ENCODE measurements at regions of chr12 and their contacts with region 1.

Region 1: DNA sequence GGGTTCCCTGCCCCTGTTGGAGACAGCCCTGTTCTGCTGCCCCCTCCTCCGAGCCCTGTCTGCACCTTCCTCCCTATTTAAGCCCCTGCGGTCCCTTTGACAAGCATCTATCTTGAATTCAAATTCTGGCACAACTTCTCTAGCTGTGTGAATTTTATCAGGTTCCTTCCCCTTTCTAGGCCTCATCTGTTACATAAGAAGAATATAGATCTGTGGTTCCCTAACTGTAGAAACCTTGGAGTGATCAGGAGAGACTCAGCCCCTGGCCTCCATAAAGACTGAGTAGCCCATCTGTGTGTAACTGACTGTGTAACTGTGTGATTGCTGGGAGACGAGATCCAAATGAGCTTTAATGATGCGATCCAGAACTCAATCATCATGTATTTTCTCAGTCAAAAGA is 13.0 kb upstream of the RACGAP1 start:
- DNase-seq: no peak
- H3K4me3 Mint-ChIP-seq: no peak overlapping the region
- H3K27ac Mint-ChIP-seq: no peak overlapping the region
- H3K4me1 Mint-ChIP-seq: peaks cover 7% of the 10 kb centered on the region
- H3K27me3 Mint-ChIP-seq: no peaks in the 10 kb centered on the region
- CTCF ChIP-seq: no peak

Region 2: GRCh38 chr12:49983892-49984291 is 54.4 kb before region 1 on chr12:
- CTCF ChIA-PET with region 1: interaction called, 21 read pairs
- POLR2A ChIA-PET with region 1: no interaction called
- intact Hi-C with region 1: no loop called
- DNase-seq: peak; percentile 45
- H3K4me3 Mint-ChIP-seq: no peak overlapping the region
- H3K27ac Mint-ChIP-seq: no peak overlapping the region
- H3K4me1 Mint-ChIP-seq: peaks cover 5% of the 10 kb centered on the region
- H3K27me3 Mint-ChIP-seq: no peaks in the 10 kb centered on the region
- CTCF ChIP-seq: no peak

Region 3: DNA sequence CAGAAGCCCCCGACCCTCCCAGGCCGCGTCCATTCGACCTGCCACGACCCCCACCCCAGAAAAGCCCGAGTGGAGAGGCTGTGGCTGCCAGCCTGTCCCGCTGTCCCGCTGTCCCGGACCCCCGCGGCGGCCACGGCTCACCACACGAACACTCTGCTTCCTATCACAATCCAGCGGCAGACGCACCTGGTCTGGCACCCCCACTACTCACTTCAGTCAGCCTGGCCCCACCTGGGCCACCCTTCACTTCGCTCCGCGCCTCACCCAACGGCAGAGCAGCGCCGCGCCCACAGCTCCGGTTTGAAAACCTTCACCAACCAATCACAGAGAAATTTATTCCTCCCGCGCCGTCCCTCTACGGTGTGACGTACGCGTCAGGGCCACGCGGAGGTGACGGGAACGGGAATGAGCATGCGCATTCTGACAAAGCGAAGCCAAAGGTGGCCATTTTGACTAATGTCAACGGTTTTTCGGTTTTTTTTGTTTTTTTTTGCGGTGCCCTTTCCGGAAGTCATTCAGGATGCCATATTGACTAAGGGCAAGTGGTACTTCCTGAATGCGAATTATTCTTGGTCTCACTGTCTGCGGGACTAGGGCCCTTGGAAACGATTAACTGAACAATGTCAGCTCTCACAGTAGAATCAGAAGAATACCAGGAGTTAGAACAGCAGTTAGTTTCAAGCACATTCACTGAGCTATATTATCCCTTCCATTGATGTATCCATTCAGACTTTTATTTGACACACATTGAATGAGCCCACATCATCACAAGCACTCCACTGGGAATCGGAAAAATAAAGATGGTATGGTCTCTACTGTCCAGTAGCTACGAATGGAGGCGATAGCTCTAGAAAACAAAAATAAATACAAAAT is 12.9 kb before region 1 on chr12 and contains the start of gene RACGAP1:
- CTCF ChIA-PET with region 1: interaction called, 17 read pairs
- POLR2A ChIA-PET with region 1: interaction called, 3 read pairs
- intact Hi-C with region 1: no loop called
- DNase-seq: peak; percentile 99
- H3K4me3 Mint-ChIP-seq: peak within 1 kb of the TSS; percentile 98
- H3K27ac Mint-ChIP-seq: peak within 1 kb of the TSS; percentile 96
- H3K4me1 Mint-ChIP-seq: peaks cover 33% of the 10 kb centered on the region
- H3K27me3 Mint-ChIP-seq: no peaks in the 10 kb centered on the region
- CTCF ChIP-seq: no peak
- total RNA-seq, gene RACGAP1: 58.5 and 67.9 TPM in 2 replicates

Region 4: DNA sequence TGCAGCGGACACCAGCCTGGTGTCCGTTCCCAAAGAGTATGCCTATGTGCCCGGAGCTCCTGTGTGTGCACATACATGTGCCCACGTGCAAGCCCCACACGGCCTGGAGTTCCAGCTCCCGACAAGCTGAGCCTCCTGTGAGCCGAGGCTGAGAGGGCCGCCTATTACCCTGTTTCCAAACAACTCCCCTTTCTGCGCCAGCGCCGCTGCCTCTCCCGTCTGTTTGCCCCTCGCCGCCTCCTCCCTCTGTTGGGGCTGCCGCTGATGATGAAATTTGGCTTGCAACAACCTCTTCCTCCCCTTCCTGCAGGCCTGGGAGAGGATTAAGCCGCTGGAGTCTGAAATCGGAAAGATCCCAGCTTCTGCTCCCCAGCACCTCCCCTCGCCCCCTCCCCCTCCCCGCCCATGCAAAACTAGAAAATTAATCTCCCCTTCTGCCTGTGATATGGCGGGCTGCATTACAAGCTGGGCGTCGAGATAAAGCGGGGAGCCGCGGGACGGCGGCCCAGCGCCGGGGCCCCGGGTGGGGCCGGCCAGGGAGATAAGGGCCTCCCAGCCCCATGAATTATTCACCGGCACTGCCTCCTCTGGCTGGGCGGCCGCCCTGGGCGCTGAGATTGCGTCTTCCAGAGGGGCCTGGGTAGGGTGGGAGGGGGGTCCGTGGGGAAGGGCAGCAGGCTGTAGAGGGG is 12.2 kb after region 1 on chr12:
- CTCF ChIA-PET with region 1: interaction called, 58 read pairs
- POLR2A ChIA-PET with region 1: interaction called, 4 read pairs
- intact Hi-C with region 1: no loop called
- DNase-seq: no peak
- H3K4me3 Mint-ChIP-seq: no peak overlapping the region
- H3K27ac Mint-ChIP-seq: no peak overlapping the region
- H3K4me1 Mint-ChIP-seq: peaks cover 1% of the 10 kb centered on the region
- H3K27me3 Mint-ChIP-seq: peaks cover 34% of the 10 kb centered on the region
- CTCF ChIP-seq: no peak

Region 5: DNA sequence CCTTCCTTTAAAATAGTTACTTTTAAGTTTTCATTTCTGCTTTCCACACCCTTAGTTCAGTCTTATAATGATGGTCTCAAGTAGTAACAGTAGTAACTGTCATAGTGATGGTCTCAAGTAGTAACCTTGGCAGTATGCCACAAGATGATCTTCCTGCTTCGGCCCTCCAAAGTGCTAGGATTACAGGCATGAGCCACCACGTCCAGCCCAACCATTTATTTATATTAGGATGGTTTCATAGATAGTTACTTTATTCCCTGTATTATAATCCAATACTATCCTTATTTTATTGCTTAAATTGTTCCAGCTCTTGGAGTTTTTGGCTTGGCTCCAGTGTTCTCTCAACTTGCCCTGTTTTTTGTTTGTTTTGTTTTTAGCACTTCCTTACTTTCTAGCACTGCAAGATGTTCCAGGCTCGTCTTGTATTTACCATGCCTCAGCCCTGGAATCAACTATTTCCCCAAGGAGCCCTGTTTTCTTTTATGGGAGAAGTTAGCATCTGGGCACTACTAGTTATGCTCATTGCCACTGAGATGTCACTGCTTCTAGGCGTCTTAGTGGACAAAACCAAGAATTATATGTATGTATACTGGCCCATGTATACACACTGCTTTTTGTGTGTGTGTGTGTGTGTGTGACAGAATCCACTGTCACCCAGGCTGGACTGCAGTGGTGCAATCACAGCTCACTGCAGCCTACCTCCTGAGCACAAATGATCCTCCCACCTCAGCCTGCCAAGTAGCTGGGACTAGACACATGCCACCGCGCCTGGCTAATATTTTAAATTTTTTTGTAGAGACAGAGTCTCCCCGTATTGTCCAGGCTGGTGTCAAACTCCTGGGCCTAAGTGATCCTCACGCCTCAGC is 219.6 kb after region 1 on chr12:
- CTCF ChIA-PET with region 1: no interaction called
- POLR2A ChIA-PET with region 1: no interaction called
- intact Hi-C with region 1: no loop called
- DNase-seq: peak; percentile 56
- H3K4me3 Mint-ChIP-seq: peak overlapping the region; percentile 9
- H3K27ac Mint-ChIP-seq: peak overlapping the region; percentile 84
- H3K4me1 Mint-ChIP-seq: peaks cover 37% of the 10 kb centered on the region
- H3K27me3 Mint-ChIP-seq: no peaks in the 10 kb centered on the region
- CTCF ChIP-seq: no peak

Region 6: GRCh38 chr12:51284476-51284875 is 1246.1 kb after region 1 on chr12:
- CTCF ChIA-PET with region 1: no interaction called
- POLR2A ChIA-PET with region 1: no interaction called
- intact Hi-C with region 1: no loop called
- DNase-seq: no peak
- H3K4me3 Mint-ChIP-seq: no peak overlapping the region
- H3K27ac Mint-ChIP-seq: no peak overlapping the region
- H3K4me1 Mint-ChIP-seq: no peaks in the 10 kb centered on the region
- H3K27me3 Mint-ChIP-seq: no peaks in the 10 kb centered on the region
- CTCF ChIP-seq: no peak